ENCODE measurements at regions of chr4 and their contacts with region 1.

Region 1: GRCh38 chr4:173538148-173538908 is 8.3 kb upstream of the HAND2 start:
- DNase-seq: peak; percentile 33
- ATAC-seq: no peak
- H3K4me3 Mint-ChIP-seq: peak overlapping the region; percentile 52
- H3K27ac Mint-ChIP-seq: no peak overlapping the region
- H3K4me1 Mint-ChIP-seq: peaks cover 8% of the 10 kb centered on the region
- H3K27me3 Mint-ChIP-seq: peaks cover 73% of the 10 kb centered on the region

Region 2: DNA sequence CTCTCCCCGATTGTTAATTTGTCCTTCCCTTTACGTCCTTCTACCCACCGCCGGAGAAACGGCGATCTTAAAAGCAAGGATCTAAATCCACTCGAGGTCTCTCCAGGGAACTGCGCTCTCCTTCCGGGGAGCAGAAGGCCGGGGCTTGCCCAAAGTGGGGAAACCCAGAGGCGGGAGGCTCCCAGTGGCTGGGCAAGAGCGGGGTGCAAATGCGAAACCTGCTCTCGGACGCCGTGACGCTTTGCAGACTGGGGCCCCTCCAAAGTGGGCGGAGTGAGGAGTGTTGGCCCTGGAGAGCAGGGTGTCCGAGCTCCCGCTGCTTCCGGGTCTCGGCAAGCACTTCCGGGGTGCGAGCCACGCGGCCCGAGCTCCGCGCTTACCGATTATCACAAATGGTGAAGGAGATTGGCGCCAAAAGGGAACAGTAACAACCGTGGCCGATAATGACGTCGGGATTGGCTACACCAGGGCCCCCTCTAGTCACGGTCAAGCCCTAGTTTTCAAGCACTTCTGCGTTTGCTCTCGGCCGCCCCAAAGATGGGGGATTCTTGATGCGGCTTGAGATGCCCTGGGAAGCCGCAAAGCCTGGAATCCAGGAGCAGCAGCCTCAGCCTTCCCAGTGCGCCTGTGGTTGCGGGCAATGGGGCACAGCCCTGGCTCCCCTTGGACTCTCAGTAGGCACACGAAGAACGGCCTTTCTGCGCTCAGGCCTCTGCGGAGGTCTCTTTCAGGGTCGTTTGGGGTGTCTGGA is 37.3 kb before region 1 on chr4:
- CTCF ChIA-PET with region 1: interaction called, 3 read pairs
- POLR2A ChIA-PET with region 1: no interaction called
- intact Hi-C with region 1: loop called in 1 of 2 experiments (anchors 5 kb)
- DNase-seq: no peak
- ATAC-seq: peak; percentile 38
- H3K4me3 Mint-ChIP-seq: peak overlapping the region; percentile 15
- H3K27ac Mint-ChIP-seq: no peak overlapping the region
- H3K4me1 Mint-ChIP-seq: peaks cover 9% of the 10 kb centered on the region
- H3K27me3 Mint-ChIP-seq: peaks cover 70% of the 10 kb centered on the region